ENCODE measurements at regions of chr20 and their contacts with region 1.

Region 1: DNA sequence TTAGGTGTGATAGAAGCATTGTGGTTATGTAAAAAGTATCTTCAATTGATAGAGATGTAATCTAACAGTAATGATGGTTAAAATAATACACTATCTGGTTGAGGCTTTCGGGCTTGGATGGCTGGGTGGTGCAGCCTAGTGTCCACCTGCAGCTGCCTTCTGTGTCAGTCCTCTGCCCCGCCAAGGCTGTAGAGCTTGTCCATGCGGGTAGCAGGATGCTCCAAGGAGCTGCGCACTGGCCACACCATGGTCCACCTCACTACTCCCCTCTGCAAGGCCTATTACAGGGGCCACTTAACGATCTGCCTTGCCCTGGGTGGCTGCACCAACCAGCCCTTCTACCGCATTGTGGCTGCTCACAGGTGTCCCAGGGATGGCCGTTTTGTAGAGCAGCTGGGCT is 50.6 kb upstream of the ZNF831 start:
- DNase-seq: no peak
- ATAC-seq: no peak
- H3K4me3 ChIP-seq: no peak overlapping the region
- H3K27ac ChIP-seq: no peak overlapping the region
- H3K4me1 ChIP-seq: no peaks in the 10 kb centered on the region
- H3K27me3 ChIP-seq: peaks cover 21% of the 10 kb centered on the region
- CTCF ChIP-seq: no peak
- POLR2A ChIP-seq: no peak
- RAD21 ChIP-seq: no peak

Region 2: DNA sequence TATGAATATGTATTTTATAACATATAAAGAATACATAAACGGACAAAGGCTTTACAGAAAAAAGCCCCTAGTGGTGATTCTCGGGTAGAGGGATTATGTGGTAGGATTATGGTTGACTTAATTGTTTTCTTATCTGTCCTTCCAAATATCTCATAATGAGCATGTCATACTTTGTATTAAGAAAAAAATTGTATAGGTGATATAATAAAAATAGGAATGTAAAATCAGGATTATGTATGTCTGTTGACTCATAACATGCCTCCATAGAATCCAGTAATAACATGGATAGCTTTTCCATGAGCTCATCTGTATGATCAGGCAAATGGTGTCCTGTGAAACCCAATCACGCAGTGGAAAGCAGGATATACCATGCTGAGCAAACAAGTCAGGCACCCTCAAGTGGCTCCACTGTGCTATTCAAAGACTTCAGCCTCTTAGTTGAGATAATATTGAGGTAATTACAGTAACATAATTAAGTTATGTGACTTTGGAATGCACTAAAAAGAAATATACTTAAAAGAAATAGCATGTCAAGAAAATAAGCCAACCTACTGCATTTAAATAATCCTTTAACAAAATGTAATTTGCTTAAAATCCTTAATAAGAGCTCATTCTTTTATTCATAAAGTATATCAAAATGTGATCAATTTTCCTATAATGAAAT is 30.8 kb before region 1 on chr20:
- CTCF ChIA-PET with region 1: no interaction called
- POLR2A ChIA-PET with region 1: no interaction called
- RAD21 ChIA-PET with region 1: no interaction called
- intact Hi-C with region 1: no loop called
- DNase-seq: peak; percentile 23
- ATAC-seq: peak; percentile 77
- H3K4me3 ChIP-seq: no peak overlapping the region
- H3K27ac ChIP-seq: no peak overlapping the region
- H3K4me1 ChIP-seq: peaks cover 0 to 12% of the 10 kb centered on the region in 2 experiments; a peak in 2 of 4 replicates
- H3K27me3 ChIP-seq: peaks cover 12% of the 10 kb centered on the region
- CTCF ChIP-seq: peak in 2 of 3 experiments; percentile 51 to 53; a peak in 4 of 6 replicates
- POLR2A ChIP-seq: no peak
- RAD21 ChIP-seq: no peak

Region 3: GRCh38 chr20:59095140-59095539 is 17.8 kb before region 1 on chr20:
- CTCF ChIA-PET with region 1: no interaction called
- POLR2A ChIA-PET with region 1: no interaction called
- RAD21 ChIA-PET with region 1: no interaction called
- intact Hi-C with region 1: loop called (anchors 1 kb)
- DNase-seq: no peak
- ATAC-seq: peak; percentile 22; the same call in 1 of the 2 replicates
- H3K4me3 ChIP-seq: peak overlapping the region; percentile 36 to 38
- H3K27ac ChIP-seq: no peak overlapping the region
- H3K4me1 ChIP-seq: no peaks in the 10 kb centered on the region
- H3K27me3 ChIP-seq: peaks cover 24% of the 10 kb centered on the region; the same call in 1 of the 2 replicates
- CTCF ChIP-seq: no peak
- POLR2A ChIP-seq: no peak
- RAD21 ChIP-seq: no peak

Region 4: GRCh38 chr20:59207742-59208357 is 94.9 kb after region 1 on chr20:
- CTCF ChIA-PET with region 1: no interaction called
- POLR2A ChIA-PET with region 1: no interaction called
- RAD21 ChIA-PET with region 1: no interaction called
- intact Hi-C with region 1: no loop called
- DNase-seq: peak; percentile 16
- ATAC-seq: peak; percentile 90
- H3K4me3 ChIP-seq: no peak overlapping the region
- H3K27ac ChIP-seq: no peak overlapping the region
- H3K4me1 ChIP-seq: no peaks in the 10 kb centered on the region
- H3K27me3 ChIP-seq: peaks cover 22% of the 10 kb centered on the region
- CTCF ChIP-seq: peak; percentile 53 to 72 (median 67); a peak in 5 of 6 replicates
- POLR2A ChIP-seq: no peak
- RAD21 ChIP-seq: peak; percentile 71